AG04449 (cell line): ENCODE measurements at regions of chr1 and their contacts with region 1.

Region 1: GRCh38 chr1:211680752-211681327 is 5.4 kb upstream of the NEK2 start:
- DNase-seq: peak; percentile 57
- H3K4me3 ChIP-seq: no peak overlapping the region
- CTCF ChIP-seq: peak; percentile 58

Region 2: DNA sequence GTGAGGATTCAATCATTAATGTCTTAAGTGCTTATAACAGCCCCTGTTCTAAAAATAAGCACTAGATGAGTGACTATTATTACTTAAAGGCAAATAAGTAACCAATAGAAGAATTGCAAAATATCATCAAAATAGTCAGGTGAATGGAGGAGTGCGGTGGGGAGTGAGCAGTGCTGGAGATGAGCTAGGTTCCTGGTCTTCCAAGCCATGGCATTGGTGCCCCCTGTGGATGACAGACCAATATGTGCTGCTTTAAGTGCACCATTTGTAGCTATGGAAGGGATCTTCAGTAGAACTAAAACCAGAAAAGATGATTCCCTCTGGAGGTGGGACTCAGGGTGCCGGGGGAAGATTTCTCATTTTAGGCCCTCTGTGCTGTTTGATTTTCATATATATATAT is 55.8 kb before region 1 on chr1:
- CTCF ChIA-PET with region 1: no interaction called
- POLR2A ChIA-PET with region 1: no interaction called
- DNase-seq: no peak
- H3K4me3 ChIP-seq: no peak overlapping the region
- CTCF ChIP-seq: peak; percentile 58

Region 3: GRCh38 chr1:211667065-211667617 is 13.7 kb before region 1 on chr1:
- CTCF ChIA-PET with region 1: interaction called, 24 read pairs
- POLR2A ChIA-PET with region 1: no interaction called
- DNase-seq: no peak
- H3K4me3 ChIP-seq: no peak overlapping the region
- CTCF ChIP-seq: no peak

Region 4: DNA sequence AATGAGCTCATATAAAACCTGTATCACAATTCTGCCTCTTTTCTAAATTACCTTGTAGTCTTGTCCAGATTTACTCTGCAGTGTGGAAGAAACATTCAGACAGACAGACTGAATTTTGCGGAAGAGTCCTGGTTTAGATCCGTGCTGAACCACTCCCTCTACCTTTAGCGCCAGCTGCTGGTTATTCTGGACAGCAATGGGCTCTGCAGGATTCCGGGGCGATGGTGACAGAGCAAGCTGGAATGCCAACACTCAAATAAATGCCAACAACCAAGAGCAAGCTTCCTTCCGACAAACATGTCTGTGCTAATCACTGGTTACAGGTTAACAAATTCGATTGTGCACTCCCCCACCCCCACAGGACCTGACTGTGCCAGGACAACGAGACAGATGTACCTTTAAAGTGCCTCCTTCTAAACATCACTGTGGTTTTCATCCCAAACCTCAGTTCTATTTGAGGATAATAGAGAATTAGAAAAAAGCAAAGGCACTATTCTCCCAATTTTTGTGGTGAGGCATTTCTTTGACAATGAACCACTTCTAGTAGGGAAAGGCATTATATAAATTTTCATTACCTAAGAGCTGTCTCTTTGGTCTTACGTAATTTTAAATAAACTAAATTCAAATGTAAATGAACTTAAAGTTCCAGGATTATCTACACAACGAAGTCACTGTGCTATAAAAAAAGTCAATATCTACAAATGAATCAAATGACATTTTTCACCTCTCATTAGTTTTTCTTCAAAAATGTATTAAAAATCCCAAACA is 264.1 kb after region 1 on chr1:
- CTCF ChIA-PET with region 1: interaction called, 17 read pairs
- POLR2A ChIA-PET with region 1: no interaction called
- DNase-seq: no peak
- H3K4me3 ChIP-seq: no peak overlapping the region
- CTCF ChIP-seq: peak; percentile 42

Region 5: DNA sequence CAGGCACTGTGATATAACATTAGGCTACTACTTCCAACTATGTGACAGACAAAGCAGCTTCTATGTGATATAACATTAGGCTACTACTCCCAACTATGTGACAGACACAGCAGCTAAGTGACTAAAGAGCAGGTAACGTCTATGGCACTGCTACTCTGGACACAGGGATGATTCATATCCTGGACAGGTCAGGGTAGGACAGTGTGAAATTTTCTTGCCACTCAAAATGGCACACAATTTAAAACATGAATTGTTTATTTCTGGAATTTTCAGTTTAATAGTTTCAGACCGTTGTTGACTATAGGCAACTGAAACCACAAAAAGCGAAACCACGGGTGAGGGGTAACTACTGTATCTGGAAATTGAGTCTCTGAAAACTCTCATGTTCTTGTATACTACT is 359.8 kb after region 1 on chr1:
- CTCF ChIA-PET with region 1: interaction called, 254 read pairs
- POLR2A ChIA-PET with region 1: no interaction called
- DNase-seq: no peak
- H3K4me3 ChIP-seq: no peak overlapping the region
- CTCF ChIP-seq: no peak